ENCODE measurements at regions of chr1 and their contacts with region 1.

Region 1: GRCh38 chr1:171683870-171684269 is 31.4 kb upstream of the MYOC start:
- DNase-seq: no peak
- H3K4me3 ChIP-seq: no peak overlapping the region
- H3K27ac ChIP-seq: no peak overlapping the region
- H3K4me1 ChIP-seq: no peaks in the 10 kb centered on the region
- H3K27me3 ChIP-seq: no peaks in the 10 kb centered on the region
- CTCF ChIP-seq: no peak

Region 2: GRCh38 chr1:171663854-171664575 is 19.9 kb before region 1 on chr1:
- CTCF ChIA-PET with region 1: no interaction called
- POLR2A ChIA-PET with region 1: no interaction called
- intact Hi-C with region 1: no loop called
- DNase-seq: no peak
- H3K4me3 ChIP-seq: no peak overlapping the region
- H3K27ac ChIP-seq: no peak overlapping the region
- H3K4me1 ChIP-seq: peaks cover 6% of the 10 kb centered on the region; the same call in 1 of the 2 replicates
- H3K27me3 ChIP-seq: no peaks in the 10 kb centered on the region
- CTCF ChIP-seq: no peak

Region 3: DNA sequence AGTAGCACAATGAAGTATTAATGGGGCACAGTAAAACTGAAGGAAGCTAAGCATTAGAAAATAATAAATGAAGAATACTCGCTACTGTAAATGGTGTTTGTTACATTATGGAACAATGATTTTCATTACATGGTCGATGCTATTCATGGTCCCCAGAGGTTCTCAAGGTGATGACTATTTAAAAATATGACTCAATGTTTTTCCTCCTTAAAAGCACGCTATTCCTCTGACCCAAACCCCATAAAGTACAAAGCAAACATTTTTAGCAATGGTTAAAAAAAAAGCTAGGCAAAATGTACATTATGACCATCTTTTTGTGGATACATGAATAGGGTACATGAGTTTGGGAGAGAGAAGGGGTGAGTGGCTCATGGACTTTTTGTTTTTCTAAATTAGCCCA is 23.7 kb after region 1 on chr1:
- CTCF ChIA-PET with region 1: interaction called, 19 read pairs
- POLR2A ChIA-PET with region 1: no interaction called
- intact Hi-C with region 1: no loop called
- DNase-seq: no peak
- H3K4me3 ChIP-seq: no peak overlapping the region
- H3K27ac ChIP-seq: no peak overlapping the region
- H3K4me1 ChIP-seq: no peaks in the 10 kb centered on the region
- H3K27me3 ChIP-seq: no peaks in the 10 kb centered on the region
- CTCF ChIP-seq: no peak

Region 4: DNA sequence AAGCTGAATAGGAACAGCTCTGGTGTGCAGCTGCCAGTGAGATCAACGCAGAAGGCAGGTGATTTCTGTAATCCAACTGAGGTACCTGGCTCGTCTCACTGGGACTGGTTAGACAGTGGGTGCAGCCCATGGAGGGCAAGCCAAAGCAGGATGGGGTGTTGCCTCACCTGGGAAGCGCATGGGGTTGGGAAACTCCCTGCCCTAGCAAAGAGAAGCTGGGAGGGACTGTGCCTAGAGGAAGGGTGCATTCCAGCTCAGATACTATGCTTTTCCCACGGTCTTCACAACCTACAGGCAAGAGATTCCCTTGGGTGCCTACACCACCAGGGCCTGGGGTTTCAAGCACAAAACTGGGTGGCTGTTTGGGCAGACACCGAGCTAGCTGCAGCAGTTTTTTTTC is 340.6 kb after region 1 on chr1:
- CTCF ChIA-PET with region 1: no interaction called
- POLR2A ChIA-PET with region 1: no interaction called
- intact Hi-C with region 1: no loop called
- DNase-seq: no peak
- H3K4me3 ChIP-seq: no peak overlapping the region
- H3K27ac ChIP-seq: no peak overlapping the region
- H3K4me1 ChIP-seq: no peaks in the 10 kb centered on the region
- H3K27me3 ChIP-seq: no peaks in the 10 kb centered on the region
- CTCF ChIP-seq: no peak

Measured in PC-9 (cell line).